Left cardiac atrium (tissue), 4 donors: ENCODE measurements at regions of chr16 and their contacts with region 1.

Region 1: DNA sequence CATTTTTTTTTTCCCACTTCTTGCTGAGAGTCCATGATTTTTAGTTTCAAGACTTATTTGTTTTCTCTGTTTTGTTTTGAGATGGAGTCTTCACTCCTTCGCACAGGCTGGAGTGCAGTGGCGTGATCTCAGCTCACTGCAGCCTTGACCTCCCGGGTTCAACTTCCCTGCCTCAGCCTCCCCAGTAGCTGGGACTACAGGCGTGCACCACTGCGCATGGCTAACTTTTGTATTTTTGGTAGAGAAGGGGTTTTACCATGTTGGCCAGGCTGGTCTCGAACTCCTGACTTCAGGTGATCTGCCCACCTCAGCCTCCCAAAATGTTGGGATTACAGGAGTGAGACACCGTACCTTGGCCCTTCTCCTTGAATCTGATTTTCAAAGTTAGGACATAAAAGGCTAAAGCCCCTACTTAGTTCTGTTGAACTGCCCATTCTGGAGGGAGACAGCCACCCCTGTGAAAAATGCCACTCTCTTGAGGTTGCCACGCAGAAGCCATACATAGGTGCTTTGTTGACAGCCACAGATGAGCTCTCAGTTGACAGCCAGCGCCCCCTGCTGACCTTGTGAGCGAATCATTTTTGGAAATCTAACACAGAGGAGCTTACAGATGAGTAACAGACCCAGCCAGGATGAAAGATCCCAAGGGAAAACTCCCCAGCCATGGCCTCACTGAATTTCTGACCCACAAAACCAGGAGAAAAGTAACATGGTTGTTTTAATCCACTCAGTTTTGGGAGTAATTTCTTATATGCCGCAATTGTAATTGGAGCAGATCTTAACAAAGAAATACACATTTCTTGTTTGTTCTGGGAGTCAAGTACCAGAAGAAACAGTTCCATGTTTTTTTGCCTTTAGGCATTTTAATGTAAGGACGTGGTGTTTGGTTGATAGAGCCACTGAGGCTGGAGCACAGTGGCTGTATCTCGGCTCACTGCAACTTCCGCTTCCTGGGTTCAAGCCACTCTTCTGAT is 38.8 kb downstream of the PKD1L3 start:
- DNase-seq: peak; percentile 84
- ATAC-seq: peak; percentile 95 to 96

Region 2: GRCh38 chr16:71883849-71884638 is 77.3 kb before region 1 on chr16 and contains the start of gene ZNF821:
- intact Hi-C with region 1: loop called in 1 of 2 experiments (anchors 5 kb)
- DNase-seq: peak; percentile 84
- ATAC-seq: peak; percentile 93 to 95
- total RNA-seq, gene ZNF821: 3.6 to 5.7 TPM

Region 3: DNA sequence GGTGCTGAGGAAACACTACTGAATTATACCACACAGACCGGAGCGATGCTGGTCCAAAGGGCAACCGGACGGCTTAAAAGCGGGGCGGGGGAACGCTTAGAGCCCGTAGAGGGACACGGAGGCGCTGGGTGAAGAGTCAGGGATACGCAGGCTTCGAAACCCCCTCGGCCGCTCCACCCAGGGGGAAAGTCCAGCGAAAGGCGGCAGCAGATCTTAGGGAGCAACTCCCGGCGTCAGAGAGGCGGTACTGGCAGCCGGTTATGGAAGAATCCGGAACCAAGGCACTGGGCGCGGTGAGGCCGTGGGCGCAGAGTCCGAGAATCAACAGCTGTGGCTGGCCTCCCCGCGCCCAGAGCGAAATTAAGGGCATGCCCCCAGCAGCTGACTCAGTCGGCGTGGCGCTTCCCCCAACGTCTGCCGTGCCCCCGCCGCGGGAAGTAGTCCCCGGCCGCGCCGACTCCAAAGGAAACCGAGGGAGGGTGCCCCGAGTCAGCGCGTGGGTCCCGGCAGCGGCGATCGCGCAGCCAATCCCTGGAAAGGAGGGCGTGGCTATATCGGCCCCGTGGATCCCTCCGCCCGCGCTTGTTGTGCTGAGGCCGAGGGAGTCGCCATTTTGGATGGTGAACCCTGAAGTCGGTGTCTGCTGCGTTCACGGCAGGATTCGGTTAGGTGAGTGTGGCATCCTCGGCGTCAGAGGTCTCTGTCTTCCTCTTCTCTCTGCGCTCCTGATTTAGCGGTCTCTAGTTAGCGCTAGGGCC is 66.3 kb before region 1 on chr16 and contains the start of gene IST1:
- intact Hi-C with region 1: loop called in 1 of 2 experiments (anchors 2 kb)
- DNase-seq: peak; percentile 99
- ATAC-seq: peak; percentile 97 to 98
- total RNA-seq, gene IST1: 117 to 138 TPM